ENCODE measurements at regions of chr7 and their contacts with region 1.

Region 1: DNA sequence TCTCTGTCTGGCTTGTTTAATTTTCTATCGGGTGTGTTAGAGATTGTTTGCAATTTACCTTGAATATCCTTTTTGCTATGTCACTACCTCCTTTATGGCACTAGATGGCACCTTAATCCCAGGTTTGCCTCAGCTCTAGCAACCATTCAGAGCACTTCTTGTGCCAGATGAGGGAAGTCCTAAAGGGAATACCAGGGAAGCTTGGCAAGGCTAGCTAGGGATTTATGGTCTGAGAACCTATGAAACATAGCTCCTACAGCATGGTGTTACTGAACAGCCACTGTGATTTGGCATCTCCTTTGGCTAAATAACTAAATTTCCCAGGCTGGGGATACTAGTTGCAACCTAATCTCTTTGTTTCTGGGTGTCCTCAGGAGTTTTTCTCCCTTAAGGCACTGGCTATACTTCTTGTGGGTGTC is 69.0 kb upstream of the VOPP1 start:
- DNase-seq: peak; percentile 70
- H3K4me3 ChIP-seq: no peak overlapping the region
- H3K27ac ChIP-seq: peak overlapping the region in 1 of 4 donors; percentile 29
- H3K4me1 ChIP-seq: peaks cover 0 to 8% (median 3%) of the 10 kb centered on the region in 4 donors
- H3K27me3 ChIP-seq: no peaks in the 10 kb centered on the region
- CTCF ChIP-seq: peak; percentile 49 to 83 (median 69)
- EP300 ChIP-seq: no peak
- POLR2A ChIP-seq: no peak

Region 2: DNA sequence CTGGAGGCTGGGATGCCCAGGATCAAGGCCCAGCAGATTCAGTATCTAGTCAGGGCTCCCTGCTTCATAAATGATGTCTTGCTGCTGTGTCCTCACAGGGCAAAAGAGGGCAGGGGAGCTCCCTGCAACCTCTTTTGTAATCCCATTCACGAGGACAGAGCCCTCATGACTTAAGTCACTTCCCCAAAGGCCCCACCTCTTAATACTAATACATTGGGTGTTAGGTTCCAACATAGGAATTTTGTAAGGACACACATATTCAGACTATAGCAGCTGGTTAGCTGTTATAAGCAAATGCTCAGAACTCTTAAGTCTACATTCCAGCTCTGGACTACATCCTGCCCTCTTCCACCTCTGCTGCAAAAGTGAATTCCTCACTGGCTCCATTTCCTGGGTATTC is 132.0 kb before region 1 on chr7:
- intact Hi-C with region 1: no loop called
- DNase-seq: no peak
- H3K4me3 ChIP-seq: no peak overlapping the region
- H3K27ac ChIP-seq: no peak overlapping the region
- H3K4me1 ChIP-seq: peaks cover 0 to 7% (median 0%) of the 10 kb centered on the region in 4 donors
- H3K27me3 ChIP-seq: no peaks in the 10 kb centered on the region
- CTCF ChIP-seq: no peak
- EP300 ChIP-seq: no peak
- POLR2A ChIP-seq: no peak

Region 3: DNA sequence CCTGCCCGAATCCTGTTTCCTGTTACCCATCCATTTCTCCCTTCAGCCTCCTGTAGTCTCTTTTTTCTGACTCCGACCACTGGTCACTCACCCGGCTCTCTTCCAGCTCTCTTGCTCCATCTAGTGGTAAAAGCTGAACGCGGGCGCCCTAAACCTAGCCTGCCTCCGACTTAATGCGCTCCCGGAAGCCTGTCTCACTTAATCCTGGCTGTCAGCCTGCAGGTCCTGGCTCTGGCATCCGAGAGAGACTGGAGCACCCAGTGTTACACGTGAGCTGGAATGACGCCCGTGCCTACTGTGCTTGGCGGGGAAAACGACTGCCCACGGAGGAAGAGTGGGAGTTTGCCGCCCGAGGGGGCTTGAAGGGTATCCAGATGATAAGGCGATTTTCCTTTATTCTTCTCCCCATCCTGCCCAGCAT is 433.1 kb after region 1 on chr7:
- intact Hi-C with region 1: loop called (anchors 5 kb)
- DNase-seq: peak; percentile 96
- H3K4me3 ChIP-seq: no peak overlapping the region
- H3K27ac ChIP-seq: peak overlapping the region in 3 of 4 donors; percentile 63 to 73 (median 65)
- H3K4me1 ChIP-seq: peaks cover 0 to 16% (median 12%) of the 10 kb centered on the region in 4 donors
- H3K27me3 ChIP-seq: no peaks in the 10 kb centered on the region
- CTCF ChIP-seq: peak; percentile 80 to 95 (median 92)
- EP300 ChIP-seq: no peak
- POLR2A ChIP-seq: no peak

Region 4: GRCh38 chr7:56092789-56093531 is 451.7 kb after region 1 on chr7 and contains the start of gene PHKG1:
- intact Hi-C with region 1: loop called (anchors 5 kb)
- DNase-seq: peak; percentile 94
- H3K4me3 ChIP-seq: peak within 1 kb of the TSS in 3 of 4 donors; percentile 10 to 37 (median 31)
- H3K27ac ChIP-seq: peak within 1 kb of the TSS; percentile 47 to 84 (median 80)
- H3K4me1 ChIP-seq: peaks cover 0 to 42% (median 33%) of the 10 kb centered on the region in 4 donors
- H3K27me3 ChIP-seq: no peaks in the 10 kb centered on the region
- CTCF ChIP-seq: peak in 1 of 4 experiments; percentile 68
- EP300 ChIP-seq: no peak
- POLR2A ChIP-seq: no peak
- total RNA-seq, gene PHKG1: 3.2 to 18.7 (median 5.6) TPM